ENCODE measurements at regions of chr13 and their contacts with region 1.

Region 1: GRCh38 chr13:103948426-103948825 is 882.2 kb upstream of the SLC10A2 start:
- DNase-seq: peak; percentile 92
- H3K4me3 ChIP-seq: no peak overlapping the region
- H3K27ac ChIP-seq: peak overlapping the region; percentile 84
- H3K4me1 ChIP-seq: peaks cover 48% of the 10 kb centered on the region
- H3K27me3 ChIP-seq: no peaks in the 10 kb centered on the region
- CTCF ChIP-seq: no peak
- POLR2A ChIP-seq: peak; percentile 38

Region 2: DNA sequence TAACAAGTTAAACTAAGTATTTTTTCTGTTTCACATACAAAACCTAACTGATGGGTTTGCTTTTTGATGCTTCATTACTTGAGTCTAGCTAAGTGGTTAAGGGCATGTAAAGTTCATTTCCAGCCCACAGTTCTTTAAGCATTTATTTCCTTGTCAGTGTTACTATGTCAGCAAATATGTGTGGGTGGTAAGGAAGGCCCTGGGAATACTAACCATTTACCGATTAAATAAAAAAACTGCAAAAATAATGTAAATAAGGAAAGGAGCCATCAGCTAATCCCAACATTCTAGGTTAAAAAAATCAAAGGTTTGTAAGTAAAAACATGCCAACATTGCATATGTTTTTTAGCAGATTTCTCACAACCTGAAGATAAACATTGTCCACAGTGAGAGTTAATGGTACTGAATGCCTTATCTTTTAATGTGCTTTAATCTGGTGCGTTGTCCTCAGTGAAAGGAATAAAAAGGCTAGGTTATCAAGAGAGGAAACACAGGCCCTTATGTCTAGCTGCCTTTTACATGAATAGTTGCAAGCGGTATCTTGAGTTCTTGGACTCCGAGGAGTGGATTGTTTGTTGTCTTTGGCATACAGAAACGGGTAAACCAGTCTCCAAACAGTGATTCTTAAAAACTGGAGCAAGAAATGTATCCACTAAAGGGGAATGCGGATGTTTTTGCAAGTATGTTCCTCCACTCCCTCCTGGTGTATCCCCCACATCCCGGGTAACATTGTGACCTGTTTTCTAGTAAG is 67.4 kb after region 1 on chr13:
- CTCF ChIA-PET with region 1: no interaction called
- POLR2A ChIA-PET with region 1: no interaction called
- dilution Hi-C with region 1: no loop called
- intact Hi-C with region 1: loop called (anchors 1 kb)
- DNase-seq: peak; percentile 89
- H3K4me3 ChIP-seq: no peak overlapping the region
- H3K27ac ChIP-seq: peak overlapping the region; percentile 74
- H3K4me1 ChIP-seq: peaks cover 23% of the 10 kb centered on the region
- H3K27me3 ChIP-seq: no peaks in the 10 kb centered on the region
- CTCF ChIP-seq: no peak
- POLR2A ChIP-seq: no peak

Region 3: DNA sequence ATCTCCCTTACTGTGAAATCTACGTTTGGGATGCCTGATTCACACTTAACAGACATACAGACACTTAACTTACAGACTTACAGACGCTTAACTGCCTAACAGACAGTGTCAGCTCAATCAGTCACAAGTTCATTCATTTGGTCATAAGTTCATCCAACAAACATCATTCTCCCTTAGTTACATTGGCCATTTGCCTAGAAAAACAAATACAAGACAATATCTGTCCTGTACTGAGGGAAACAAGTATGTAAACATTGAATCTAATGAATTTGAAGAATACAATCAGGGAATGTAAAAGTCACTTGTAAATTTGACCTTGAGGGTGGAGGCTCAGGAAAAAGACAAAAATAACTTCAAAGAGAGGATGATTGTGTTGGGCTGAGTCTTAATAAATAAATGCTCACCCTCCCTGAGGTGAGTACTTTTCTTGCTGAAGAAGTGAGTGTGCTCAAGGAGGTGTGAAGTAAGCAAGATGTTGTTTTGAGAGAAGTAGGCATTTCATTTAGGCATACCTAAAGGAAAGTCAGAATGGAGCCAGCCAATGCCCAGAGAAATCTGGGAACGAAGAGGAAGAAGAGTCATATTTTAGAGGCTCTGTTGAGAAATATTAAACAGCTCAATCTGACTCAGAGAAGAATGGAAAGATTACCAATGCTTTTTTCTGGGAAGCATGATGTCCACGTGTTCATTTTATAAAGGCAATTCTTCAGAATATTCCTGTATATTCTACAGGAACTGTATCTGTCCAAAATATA is 76.2 kb after region 1 on chr13:
- CTCF ChIA-PET with region 1: no interaction called
- POLR2A ChIA-PET with region 1: no interaction called
- dilution Hi-C with region 1: no loop called
- intact Hi-C with region 1: loop called (anchors 2 kb)
- DNase-seq: peak; percentile 76
- H3K4me3 ChIP-seq: no peak overlapping the region
- H3K27ac ChIP-seq: peak overlapping the region; percentile 65
- H3K4me1 ChIP-seq: peaks cover 14% of the 10 kb centered on the region
- H3K27me3 ChIP-seq: no peaks in the 10 kb centered on the region
- CTCF ChIP-seq: no peak
- POLR2A ChIP-seq: no peak

Region 4: DNA sequence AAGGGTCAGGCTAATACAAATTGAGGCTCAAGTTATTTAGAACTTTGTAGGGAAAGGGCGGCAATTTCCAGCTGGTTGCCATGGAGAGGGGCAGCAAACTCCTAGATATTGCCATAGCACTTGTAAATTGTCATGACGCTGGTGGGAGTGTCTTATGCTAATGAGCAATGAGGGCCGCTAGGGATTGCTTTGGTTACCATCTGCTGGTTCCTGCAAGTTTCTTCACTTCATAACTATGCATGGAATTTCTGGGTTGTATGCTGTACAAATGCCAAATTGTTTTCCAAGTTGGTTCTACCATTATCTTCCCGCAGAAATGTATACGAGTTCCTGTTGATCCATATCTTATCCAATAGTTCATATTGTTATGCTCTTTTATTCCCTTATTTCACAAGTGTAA is 1247.6 kb after region 1 on chr13:
- CTCF ChIA-PET with region 1: no interaction called
- POLR2A ChIA-PET with region 1: no interaction called
- dilution Hi-C with region 1: no loop called
- intact Hi-C with region 1: loop called (anchors 1 kb)
- DNase-seq: peak; percentile 88
- H3K4me3 ChIP-seq: no peak overlapping the region
- H3K27ac ChIP-seq: peak overlapping the region; percentile 69
- H3K4me1 ChIP-seq: peaks cover 9% of the 10 kb centered on the region
- H3K27me3 ChIP-seq: no peaks in the 10 kb centered on the region
- CTCF ChIP-seq: no peak
- POLR2A ChIP-seq: no peak

Region 5: DNA sequence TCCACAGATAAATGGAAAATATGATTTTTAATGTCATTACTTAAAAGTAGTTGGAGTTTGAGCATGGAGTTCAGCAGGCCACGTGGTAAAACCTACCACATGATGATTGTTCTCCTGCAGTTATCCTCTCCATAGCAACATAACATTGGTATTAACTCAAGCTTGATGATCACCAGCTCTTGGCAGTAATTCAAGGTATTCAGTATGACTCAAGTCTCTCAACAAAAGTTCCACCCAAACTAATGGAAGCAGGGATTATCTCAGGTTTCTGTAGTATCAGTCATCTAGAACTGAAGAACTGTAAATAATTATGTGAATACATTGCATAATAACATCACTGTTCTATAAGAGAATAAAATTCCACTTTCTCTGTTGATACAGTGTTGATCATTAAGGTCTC is 1494.5 kb after region 1 on chr13:
- CTCF ChIA-PET with region 1: no interaction called
- POLR2A ChIA-PET with region 1: no interaction called
- dilution Hi-C with region 1: no loop called
- intact Hi-C with region 1: loop called (anchors 5 kb)
- DNase-seq: peak; percentile 93
- H3K4me3 ChIP-seq: no peak overlapping the region
- H3K27ac ChIP-seq: peak overlapping the region; percentile 65
- H3K4me1 ChIP-seq: peaks cover 24% of the 10 kb centered on the region
- H3K27me3 ChIP-seq: no peaks in the 10 kb centered on the region
- CTCF ChIP-seq: no peak
- POLR2A ChIP-seq: no peak